ENCODE measurements at regions of chr20 and their contacts with region 1.

Region 1: DNA sequence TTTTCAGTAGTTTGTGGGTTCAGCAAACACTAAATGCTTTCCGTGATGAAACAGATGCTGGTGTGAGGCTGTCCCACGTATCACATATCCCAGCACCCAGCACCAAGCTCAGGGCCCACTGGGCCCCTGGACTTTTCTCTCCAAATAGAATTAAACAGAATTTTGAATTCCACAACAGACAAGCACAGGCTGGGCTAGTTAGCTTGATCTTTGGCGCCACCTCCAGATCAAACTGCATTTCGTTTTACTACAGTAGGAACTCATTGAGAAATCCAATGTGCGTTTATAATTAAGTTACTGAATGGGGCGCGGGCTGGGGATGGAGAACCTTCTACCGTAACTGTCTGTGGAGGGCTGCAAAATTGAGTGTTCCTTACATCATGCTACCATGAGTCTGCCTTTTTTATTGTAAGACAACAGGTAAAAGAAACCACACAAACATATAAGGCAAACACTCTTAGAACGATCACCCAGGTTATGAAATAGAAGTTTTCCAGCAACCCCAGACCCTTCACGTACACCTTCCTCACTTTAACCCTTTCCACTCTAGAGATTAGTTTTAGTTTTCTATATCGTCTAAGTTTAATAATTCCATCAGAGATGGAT is 107.8 kb downstream of the ZFP64 start:
- DNase-seq: peak; percentile 25
- H3K4me3 ChIP-seq: no peak overlapping the region
- H3K27ac ChIP-seq: no peak overlapping the region
- H3K4me1 ChIP-seq: no peaks in the 10 kb centered on the region
- H3K27me3 ChIP-seq: no peaks in the 10 kb centered on the region
- CTCF ChIP-seq: peak; percentile 55 to 77

Region 2: DNA sequence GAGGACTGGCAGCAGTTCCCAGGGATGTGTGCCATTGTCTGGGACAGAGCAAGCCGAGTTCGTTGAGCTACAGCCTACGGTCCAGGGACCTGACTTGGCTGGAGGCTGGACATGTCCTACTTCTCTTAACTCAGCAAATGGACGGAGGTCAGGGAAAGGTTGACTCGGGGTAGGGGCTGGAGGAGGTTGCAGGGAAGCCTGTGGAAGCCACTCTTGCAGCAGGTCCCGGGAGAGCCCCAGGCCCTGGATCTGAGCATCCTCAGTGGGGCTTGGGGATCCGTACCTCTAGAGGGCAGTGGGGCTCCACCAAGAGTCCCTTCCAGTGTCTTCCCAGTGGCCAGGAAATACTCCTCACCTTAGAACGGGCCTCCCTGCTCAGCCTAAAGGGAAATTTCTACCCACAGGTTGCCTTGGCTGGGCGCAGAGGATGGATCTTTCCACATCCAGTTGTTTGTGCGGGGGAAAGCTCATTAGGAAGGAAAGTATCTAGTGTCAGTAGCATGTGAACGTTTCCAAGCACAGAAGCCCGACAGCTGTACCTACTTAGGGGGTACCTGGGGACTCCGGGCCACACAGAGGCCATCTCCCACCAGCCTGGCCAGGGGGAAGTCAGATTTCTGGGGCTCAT is 711.4 kb before region 1 on chr20:
- CTCF ChIA-PET with region 1: no interaction called
- dilution Hi-C with region 1: no loop called
- in situ Hi-C with region 1: loop called (anchors 5 to 25 kb)
- intact Hi-C with region 1: loop called (anchors 2 kb)
- DNase-seq: peak; percentile 62
- H3K4me3 ChIP-seq: no peak overlapping the region
- H3K27ac ChIP-seq: no peak overlapping the region
- H3K4me1 ChIP-seq: peaks cover under 1% of the 10 kb centered on the region
- H3K27me3 ChIP-seq: no peaks in the 10 kb centered on the region
- CTCF ChIP-seq: peak; percentile 82 to 94

Region 3: DNA sequence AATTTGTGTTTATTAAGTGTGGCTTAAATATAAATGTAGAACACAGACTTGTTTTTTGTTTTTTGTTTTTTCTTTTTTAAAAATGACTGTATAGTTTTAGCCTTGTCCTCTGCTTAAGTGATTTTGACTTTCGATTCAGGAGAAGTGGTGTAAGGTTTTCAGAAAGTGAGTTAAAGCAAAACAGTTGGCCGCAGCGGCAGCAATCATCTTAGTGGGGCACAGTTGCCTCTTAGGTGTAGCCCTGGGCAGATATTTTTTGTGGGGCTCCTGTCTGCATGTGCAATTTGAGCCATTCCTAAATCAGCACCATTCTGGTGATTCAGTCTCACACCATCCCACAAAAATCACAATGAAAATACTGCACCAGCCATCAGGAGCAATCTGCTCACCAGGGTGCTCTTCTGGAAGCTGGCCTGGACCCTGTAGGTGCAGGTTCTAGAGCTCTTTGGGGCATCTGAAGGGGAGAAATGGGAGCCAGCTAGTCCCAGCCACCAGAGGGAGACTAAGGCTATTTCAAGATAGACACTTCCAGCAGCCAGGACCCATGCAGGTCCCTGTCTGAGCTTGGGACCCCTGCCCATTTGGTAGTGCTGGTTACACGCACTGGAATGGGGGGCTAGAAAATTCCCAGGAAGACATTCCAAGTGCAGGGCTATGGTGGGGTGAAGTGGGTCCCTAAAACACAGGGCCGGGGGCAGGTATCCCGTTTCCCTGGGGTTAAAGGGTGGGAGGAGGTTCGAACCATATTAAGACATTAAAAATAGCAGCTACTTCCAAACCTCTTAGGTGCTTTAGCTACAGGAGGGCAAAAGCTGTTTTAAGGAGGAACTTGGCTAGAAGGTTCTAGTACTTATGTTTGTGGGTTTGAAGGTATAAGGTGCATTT is 697.8 kb before region 1 on chr20:
- CTCF ChIA-PET with region 1: interaction called, 4 read pairs
- dilution Hi-C with region 1: no loop called
- in situ Hi-C with region 1: no loop called
- intact Hi-C with region 1: loop called (anchors 5 kb)
- DNase-seq: peak; percentile 16
- H3K4me3 ChIP-seq: no peak overlapping the region
- H3K27ac ChIP-seq: no peak overlapping the region
- H3K4me1 ChIP-seq: no peaks in the 10 kb centered on the region
- H3K27me3 ChIP-seq: no peaks in the 10 kb centered on the region
- CTCF ChIP-seq: peak; percentile 41 to 79

Region 4: GRCh38 chr20:51631011-51631950 is 452.4 kb before region 1 on chr20:
- CTCF ChIA-PET with region 1: no interaction called
- dilution Hi-C with region 1: no loop called
- in situ Hi-C with region 1: loop called (anchors 5 to 10 kb)
- intact Hi-C with region 1: no loop called
- DNase-seq: peak; percentile 92
- H3K4me3 ChIP-seq: no peak overlapping the region
- H3K27ac ChIP-seq: peak overlapping the region; percentile 59
- H3K4me1 ChIP-seq: peaks cover 13% of the 10 kb centered on the region
- H3K27me3 ChIP-seq: no peaks in the 10 kb centered on the region
- CTCF ChIP-seq: no peak

Region 5: DNA sequence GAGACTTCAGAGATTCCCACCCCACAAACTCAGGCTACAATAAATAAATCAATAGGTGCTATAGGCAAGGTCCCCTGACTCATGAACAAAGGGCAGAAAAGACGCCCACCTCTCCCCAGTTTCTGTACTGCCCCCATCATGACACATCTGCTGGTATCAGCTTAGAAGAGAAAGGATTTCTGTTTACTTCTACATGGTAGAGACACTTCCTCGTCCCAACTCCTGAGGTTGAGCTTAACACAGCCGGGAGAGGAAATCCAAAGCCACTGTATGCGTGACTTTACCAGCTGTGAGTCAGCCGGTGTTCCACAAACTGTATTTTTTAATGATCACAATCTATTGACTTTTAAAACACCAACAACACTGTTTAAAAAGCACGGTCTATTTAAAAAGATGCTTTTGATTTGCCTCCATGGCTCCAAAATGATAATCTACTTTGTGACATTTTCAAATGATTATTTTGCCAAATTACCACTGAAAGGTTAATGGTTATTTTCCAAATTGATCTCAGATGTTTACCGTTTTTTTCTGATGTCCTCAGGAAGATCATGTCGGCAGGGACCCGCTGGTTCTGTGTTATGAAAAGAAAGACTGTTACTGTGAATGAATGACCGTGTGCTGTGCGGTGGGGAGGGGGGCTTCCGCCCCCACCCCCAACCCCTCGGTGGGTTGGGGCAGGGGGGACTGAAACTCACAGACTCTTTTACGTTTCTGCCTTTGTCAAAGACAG is 388.0 kb before region 1 on chr20:
- CTCF ChIA-PET with region 1: no interaction called
- dilution Hi-C with region 1: no loop called
- in situ Hi-C with region 1: no loop called
- intact Hi-C with region 1: loop called (anchors 1 kb)
- DNase-seq: peak; percentile 58
- H3K4me3 ChIP-seq: no peak overlapping the region
- H3K27ac ChIP-seq: peak overlapping the region; percentile 20
- H3K4me1 ChIP-seq: peaks cover 11% of the 10 kb centered on the region
- H3K27me3 ChIP-seq: no peaks in the 10 kb centered on the region
- CTCF ChIP-seq: no peak

Region 6: DNA sequence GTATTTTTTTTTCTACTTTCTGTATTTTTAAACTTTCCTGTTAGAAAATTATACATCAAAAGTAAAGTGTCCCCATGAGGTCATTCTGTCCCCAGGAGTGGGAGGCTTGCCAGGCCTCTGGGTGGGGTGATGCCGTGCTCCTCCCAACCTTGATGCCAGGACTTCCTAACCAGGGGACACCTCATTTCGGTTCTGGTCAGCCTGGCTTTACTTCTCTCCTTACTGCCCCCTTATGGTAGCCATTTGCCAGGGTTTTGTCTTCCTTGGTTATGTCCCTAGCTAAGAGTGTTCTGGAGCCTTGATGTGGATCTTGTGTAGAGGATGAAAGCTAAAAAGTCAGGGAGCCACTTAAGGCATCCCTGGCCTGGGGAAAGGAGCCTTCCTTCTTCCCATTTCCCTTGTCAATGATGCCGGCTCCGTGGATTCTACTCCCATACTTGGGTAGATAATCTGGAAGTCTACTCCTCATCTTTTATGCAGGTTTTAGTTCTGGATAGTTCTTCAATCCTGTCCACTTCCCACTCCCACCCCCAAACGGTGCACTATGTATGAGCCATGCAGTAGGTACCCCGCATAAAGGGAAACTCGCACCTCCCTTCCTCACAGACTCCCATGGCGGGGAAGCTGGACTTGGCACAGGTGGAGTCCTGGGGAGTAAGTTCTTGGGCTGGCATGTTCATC is 117.3 kb before region 1 on chr20:
- CTCF ChIA-PET with region 1: no interaction called
- dilution Hi-C with region 1: no loop called
- in situ Hi-C with region 1: no loop called
- intact Hi-C with region 1: loop called (anchors 5 kb)
- DNase-seq: peak; percentile 36
- H3K4me3 ChIP-seq: no peak overlapping the region
- H3K27ac ChIP-seq: no peak overlapping the region
- H3K4me1 ChIP-seq: no peaks in the 10 kb centered on the region
- H3K27me3 ChIP-seq: no peaks in the 10 kb centered on the region
- CTCF ChIP-seq: peak; percentile 46 to 76

Measured in mammary epithelial cell (primary cell).